Activated naive CD4-positive, alpha-beta T cell treated with anti-CD3 and anti-CD28 coated beads, Interleukin-2, amount 10 ng/mL, durations not matched to agents 7 days and 5 days (primary cell): ENCODE measurements at regions of chr19 and their contacts with region 1.

Region 1: DNA sequence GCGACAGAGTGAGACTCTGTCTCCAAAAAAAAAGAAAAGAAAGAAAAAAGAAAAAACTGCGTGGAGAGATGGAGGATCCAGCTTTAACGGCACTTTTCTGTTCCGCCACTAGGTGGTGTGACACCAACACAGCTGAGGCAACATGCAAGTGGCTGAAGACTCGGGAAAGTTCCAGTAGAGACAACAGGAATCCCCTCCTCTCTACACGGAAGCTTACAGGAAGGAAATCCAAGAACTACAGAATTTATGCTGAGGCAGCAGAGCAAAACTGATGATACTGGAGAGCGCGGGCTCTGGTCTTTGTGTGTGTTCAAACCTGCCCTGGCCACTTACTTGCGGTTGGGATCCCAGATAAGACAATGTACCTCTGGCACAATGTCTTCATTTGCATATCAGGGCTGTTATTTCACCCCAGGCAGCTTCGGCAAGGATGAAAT is 9.9 kb downstream of the RANBP3 start:
- DNase-seq: peak; percentile 78
- H3K4me3 Mint-ChIP-seq: no peak overlapping the region
- H3K27ac Mint-ChIP-seq: peak overlapping the region; percentile 53
- H3K4me1 Mint-ChIP-seq: peaks cover 78% of the 10 kb centered on the region
- H3K27me3 Mint-ChIP-seq: no peaks in the 10 kb centered on the region

Region 2: DNA sequence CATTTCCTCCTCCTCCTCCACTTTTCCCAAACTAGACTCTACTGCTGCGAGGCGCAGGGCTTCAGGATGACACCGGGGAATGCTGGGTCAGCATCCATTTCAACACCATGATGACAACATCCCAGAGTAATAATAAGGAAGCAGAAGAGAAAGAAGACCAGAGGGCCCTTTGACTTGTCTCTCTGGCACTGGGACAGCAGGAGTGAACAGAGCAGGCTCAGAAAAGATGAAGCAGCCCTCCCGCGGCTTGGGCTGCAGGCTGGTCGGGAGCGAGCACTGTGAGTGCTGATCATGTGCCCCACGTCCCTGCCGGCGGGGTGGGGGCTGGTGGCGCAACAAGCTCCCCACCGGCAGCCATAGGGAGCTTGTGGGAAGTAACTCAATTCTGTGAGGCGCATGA is 20.6 kb before region 1 on chr19:
- CTCF ChIA-PET with region 1: interaction called, 15 read pairs
- DNase-seq: no peak
- H3K4me3 Mint-ChIP-seq: no peak overlapping the region
- H3K27ac Mint-ChIP-seq: peak overlapping the region; percentile 80
- H3K4me1 Mint-ChIP-seq: peaks cover 57% of the 10 kb centered on the region
- H3K27me3 Mint-ChIP-seq: no peaks in the 10 kb centered on the region

Region 3: GRCh38 chr19:5953680-5954213 is 14.3 kb before region 1 on chr19:
- CTCF ChIA-PET with region 1: interaction called, 15 read pairs
- DNase-seq: peak; percentile 65
- H3K4me3 Mint-ChIP-seq: peak overlapping the region; percentile 58
- H3K27ac Mint-ChIP-seq: peak overlapping the region; percentile 97
- H3K4me1 Mint-ChIP-seq: peaks cover 91% of the 10 kb centered on the region
- H3K27me3 Mint-ChIP-seq: no peaks in the 10 kb centered on the region

Region 4: GRCh38 chr19:5987077-5987818 is 19.2 kb after region 1 on chr19:
- CTCF ChIA-PET with region 1: interaction called, 26 read pairs
- DNase-seq: peak; percentile 85
- H3K4me3 Mint-ChIP-seq: peak overlapping the region; percentile 55
- H3K27ac Mint-ChIP-seq: peak overlapping the region; percentile 9
- H3K4me1 Mint-ChIP-seq: peaks cover 41% of the 10 kb centered on the region
- H3K27me3 Mint-ChIP-seq: peaks cover 7% of the 10 kb centered on the region

Region 5: DNA sequence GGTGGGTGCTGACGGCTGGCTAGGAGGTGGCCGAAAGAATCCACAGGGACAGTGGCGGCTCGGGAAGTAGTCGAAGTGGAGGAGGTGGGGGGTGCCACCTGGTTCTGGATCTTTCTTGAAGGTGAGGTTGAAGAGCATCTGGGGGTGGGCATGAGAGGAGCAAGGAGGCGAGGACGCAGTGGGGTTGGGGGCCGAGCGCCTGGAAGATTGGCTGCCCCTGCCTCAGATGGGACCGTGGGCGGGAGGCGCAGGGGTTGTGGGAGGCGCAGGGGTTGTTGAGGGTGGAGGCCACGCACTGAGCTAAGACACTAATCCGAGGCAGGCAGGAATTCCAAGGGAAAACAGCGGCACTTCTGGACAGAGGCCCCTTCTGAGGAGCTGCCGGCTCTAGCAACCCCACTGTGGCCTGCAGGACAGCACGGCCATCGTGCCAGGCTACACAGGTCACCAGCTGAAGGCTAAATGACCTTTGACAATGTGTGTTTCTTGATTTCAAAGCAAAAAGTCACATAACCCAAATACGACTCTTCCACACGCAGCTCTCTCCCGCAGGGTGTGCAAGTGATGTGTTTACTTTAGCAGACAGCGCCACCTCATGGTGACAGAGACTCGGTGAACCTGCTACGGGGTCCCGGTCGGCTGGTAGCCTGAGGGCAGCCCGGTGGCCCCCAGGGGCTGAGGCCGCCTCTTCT is 54.0 kb after region 1 on chr19:
- CTCF ChIA-PET with region 1: interaction called, 26 read pairs
- DNase-seq: peak; percentile 88
- H3K4me3 Mint-ChIP-seq: no peak overlapping the region
- H3K27ac Mint-ChIP-seq: no peak overlapping the region
- H3K4me1 Mint-ChIP-seq: peaks cover 11% of the 10 kb centered on the region
- H3K27me3 Mint-ChIP-seq: peaks cover 14% of the 10 kb centered on the region